ENCODE measurements at regions of chr3 and their contacts with region 1.

Region 1: GRCh38 chr3:142129516-142130171 is 19.7 kb downstream of the TFDP2 start:
- DNase-seq: no peak
- H3K4me3 Mint-ChIP-seq: no peak overlapping the region
- H3K27ac Mint-ChIP-seq: no peak overlapping the region
- H3K4me1 Mint-ChIP-seq: no peaks in the 10 kb centered on the region
- H3K27me3 Mint-ChIP-seq: no peaks in the 10 kb centered on the region
- CTCF ChIP-seq: no peak

Region 2: GRCh38 chr3:141959921-141960554 is 169.6 kb before region 1 on chr3:
- CTCF ChIA-PET with region 1: no interaction called
- POLR2A ChIA-PET with region 1: no interaction called
- intact Hi-C with region 1: loop called (anchors 5 kb)
- DNase-seq: peak; percentile 76
- H3K4me3 Mint-ChIP-seq: peak overlapping the region; percentile 10
- H3K27ac Mint-ChIP-seq: peak overlapping the region; percentile 87
- H3K4me1 Mint-ChIP-seq: peaks cover 12% of the 10 kb centered on the region
- H3K27me3 Mint-ChIP-seq: no peaks in the 10 kb centered on the region
- CTCF ChIP-seq: no peak

Region 3: DNA sequence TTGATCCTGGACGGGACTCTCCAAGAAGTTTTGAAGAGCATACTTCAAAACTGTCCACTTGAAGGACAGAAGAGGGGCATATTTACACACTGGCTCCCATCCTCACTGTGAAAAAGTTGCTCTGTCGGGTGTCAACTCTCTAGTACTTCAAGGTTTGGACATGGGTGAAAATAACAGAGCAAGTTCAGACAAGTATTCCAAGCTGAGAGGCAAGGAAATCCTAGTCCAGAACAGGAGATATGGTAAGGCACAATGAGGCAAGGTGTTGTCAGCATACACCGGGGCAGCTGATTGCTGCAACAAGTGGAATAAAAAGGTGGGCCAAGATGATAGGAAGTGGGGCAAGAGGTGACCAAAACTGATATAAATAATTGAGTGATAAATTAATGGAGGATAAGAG is 24.5 kb after region 1 on chr3:
- CTCF ChIA-PET with region 1: interaction called, 11 read pairs
- POLR2A ChIA-PET with region 1: interaction called, 7 read pairs
- intact Hi-C with region 1: no loop called
- DNase-seq: no peak
- H3K4me3 Mint-ChIP-seq: peak overlapping the region; percentile 7
- H3K27ac Mint-ChIP-seq: peak overlapping the region; percentile 14
- H3K4me1 Mint-ChIP-seq: peaks cover 7% of the 10 kb centered on the region
- H3K27me3 Mint-ChIP-seq: no peaks in the 10 kb centered on the region
- CTCF ChIP-seq: no peak

Region 4: DNA sequence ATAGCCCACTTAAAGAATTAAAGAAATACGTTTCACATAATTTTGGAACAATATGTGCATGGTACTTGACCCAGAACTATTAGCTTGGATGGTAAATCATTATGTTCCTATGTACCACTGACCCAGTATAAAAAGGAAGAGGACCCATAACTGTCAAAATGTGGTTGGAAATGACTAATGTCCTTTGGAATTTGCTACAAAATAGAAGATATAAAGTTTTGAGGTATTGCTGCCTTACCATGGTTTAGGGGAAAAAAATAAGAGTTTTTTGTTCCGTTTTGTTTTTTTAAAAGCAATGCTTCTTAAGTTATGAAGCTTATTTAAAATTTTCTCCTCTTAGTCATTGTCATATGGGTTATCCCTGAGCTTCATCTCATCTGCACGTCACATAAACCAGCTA is 35.5 kb after region 1 on chr3:
- CTCF ChIA-PET with region 1: interaction called, 12 read pairs
- POLR2A ChIA-PET with region 1: no interaction called
- intact Hi-C with region 1: loop called (anchors 2 kb)
- DNase-seq: no peak
- H3K4me3 Mint-ChIP-seq: no peak overlapping the region
- H3K27ac Mint-ChIP-seq: no peak overlapping the region
- H3K4me1 Mint-ChIP-seq: no peaks in the 10 kb centered on the region
- H3K27me3 Mint-ChIP-seq: no peaks in the 10 kb centered on the region
- CTCF ChIP-seq: no peak

Region 5: GRCh38 chr3:142211035-142211434 is 81.4 kb after region 1 on chr3:
- CTCF ChIA-PET with region 1: interaction called, 3 read pairs
- POLR2A ChIA-PET with region 1: no interaction called
- intact Hi-C with region 1: loop called (anchors 1 kb)
- DNase-seq: no peak
- H3K4me3 Mint-ChIP-seq: no peak overlapping the region
- H3K27ac Mint-ChIP-seq: peak overlapping the region; percentile 99
- H3K4me1 Mint-ChIP-seq: peaks cover 25% of the 10 kb centered on the region
- H3K27me3 Mint-ChIP-seq: no peaks in the 10 kb centered on the region
- CTCF ChIP-seq: peak; percentile 10

Region 6: DNA sequence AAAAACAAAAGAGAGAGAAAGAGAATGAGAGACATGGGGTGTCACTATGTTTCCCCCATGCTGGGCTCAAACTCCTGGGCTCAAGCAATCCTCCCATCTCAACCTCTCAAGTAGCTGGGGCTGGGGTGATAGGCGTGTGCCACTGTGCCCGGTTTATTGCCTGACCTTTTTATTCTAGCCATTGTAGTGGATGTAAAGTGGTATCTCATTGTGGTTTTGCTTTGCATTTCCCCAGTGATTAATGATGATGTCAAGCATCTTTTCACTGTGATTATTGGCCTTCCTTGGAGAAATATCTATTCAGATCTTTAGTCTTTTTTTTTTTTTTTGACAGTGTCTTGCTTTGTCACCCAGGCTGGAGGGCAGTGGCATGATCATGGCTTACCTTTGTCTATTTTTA is 133.5 kb after region 1 on chr3:
- CTCF ChIA-PET with region 1: interaction called, 10 read pairs
- POLR2A ChIA-PET with region 1: no interaction called
- intact Hi-C with region 1: no loop called
- DNase-seq: no peak
- H3K4me3 Mint-ChIP-seq: no peak overlapping the region
- H3K27ac Mint-ChIP-seq: no peak overlapping the region
- H3K4me1 Mint-ChIP-seq: no peaks in the 10 kb centered on the region
- H3K27me3 Mint-ChIP-seq: no peaks in the 10 kb centered on the region
- CTCF ChIP-seq: no peak